HEK293 (cell line): ENCODE measurements at regions of chr20 and their contacts with region 1.

Region 1: DNA sequence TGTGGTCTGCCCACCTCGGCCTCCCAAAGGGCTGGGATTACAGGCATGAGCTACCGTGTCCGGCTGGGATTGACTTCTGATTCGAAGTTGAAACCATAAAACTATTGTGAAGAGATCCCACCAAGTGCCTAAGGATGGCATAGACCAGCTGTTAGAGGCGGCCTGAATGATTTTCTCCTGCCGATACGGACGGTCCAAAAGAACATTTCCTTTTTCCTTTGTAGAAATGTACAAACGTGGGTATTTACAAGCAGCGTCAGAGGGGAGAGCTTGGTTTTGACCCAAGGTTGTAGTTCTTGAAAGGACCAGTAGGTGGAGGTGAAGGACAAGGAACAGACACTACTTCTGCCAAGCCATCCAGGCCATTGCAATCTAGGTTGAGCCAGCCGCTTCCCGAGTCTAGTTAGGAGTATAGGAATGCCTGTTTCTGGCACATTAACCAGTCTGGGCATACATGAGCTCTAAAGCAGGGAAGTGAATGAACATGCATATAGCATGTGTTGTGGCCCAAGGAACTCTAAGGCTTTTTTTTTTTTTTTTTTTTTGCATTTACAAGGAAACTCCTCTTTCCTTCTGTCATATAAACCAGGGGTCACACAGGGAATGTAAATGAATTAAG is 29.1 kb downstream of the MOCS3 start:
- H3K4me3 ChIP-seq: no peak overlapping the region
- H3K27ac ChIP-seq: no peak overlapping the region
- H3K4me1 ChIP-seq: no peaks in the 10 kb centered on the region
- CTCF ChIP-seq: peak; percentile 80

Region 2: GRCh38 chr20:50790651-50791277 is 196.9 kb before region 1 on chr20:
- CTCF ChIA-PET with region 1: interaction called, 14 read pairs
- POLR2A ChIA-PET with region 1: no interaction called
- H3K4me3 ChIP-seq: no peak overlapping the region
- H3K27ac ChIP-seq: peak overlapping the region; percentile 58
- H3K4me1 ChIP-seq: peaks cover 2% of the 10 kb centered on the region; the same call in 1 of the 2 replicates
- CTCF ChIP-seq: peak; percentile 98

Region 3: DNA sequence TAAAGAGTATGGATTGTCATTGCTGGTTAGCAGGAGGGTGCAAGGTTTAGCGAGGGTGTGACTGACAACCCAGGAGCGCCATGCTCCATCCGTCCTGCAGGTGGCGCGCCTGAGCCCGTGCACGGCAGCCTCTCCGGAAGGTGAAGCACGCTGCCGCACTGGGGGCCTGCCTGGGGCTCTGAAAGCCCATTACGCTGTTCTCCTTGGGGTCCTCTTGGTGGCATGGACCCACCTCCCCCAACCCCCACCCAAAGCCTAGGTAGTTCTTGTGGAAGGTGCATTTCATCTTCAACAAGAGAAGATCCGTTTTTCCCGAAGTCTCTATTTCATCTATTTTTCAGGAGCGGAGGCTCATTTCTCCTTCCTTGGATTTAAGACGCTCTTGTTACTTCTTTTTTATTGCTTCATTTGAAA is 232.6 kb after region 1 on chr20:
- CTCF ChIA-PET with region 1: interaction called, 11 read pairs
- POLR2A ChIA-PET with region 1: no interaction called
- H3K4me3 ChIP-seq: no peak overlapping the region
- H3K27ac ChIP-seq: no peak overlapping the region
- H3K4me1 ChIP-seq: no peaks in the 10 kb centered on the region
- CTCF ChIP-seq: peak; percentile 77

Region 4: GRCh38 chr20:51326201-51326819 is 338.6 kb after region 1 on chr20:
- CTCF ChIA-PET with region 1: interaction called, 14 read pairs
- POLR2A ChIA-PET with region 1: no interaction called
- H3K4me3 ChIP-seq: no peak overlapping the region
- H3K27ac ChIP-seq: no peak overlapping the region
- H3K4me1 ChIP-seq: no peaks in the 10 kb centered on the region
- CTCF ChIP-seq: no peak

Region 5: DNA sequence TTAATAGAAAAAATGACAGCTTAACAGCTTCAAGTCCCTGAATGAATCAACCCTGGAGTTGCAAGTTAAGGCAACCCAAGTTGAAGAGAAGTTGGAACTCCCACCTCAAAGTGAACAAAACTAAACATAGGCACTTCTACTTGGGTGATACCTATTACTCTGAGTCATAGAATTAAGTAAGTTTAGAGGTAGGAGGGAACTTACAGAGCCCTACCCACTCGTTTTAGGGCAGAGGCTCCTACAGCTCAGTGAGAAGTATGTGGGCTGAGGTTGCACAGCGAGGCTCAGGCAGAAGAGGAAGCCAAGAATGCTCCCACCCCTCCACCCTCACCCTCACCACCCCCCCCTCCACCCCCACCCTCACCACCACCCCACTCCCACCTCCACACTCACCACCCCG is 512.6 kb after region 1 on chr20:
- CTCF ChIA-PET with region 1: no interaction called
- POLR2A ChIA-PET with region 1: no interaction called
- H3K4me3 ChIP-seq: no peak overlapping the region
- H3K27ac ChIP-seq: no peak overlapping the region
- H3K4me1 ChIP-seq: peaks cover 3% of the 10 kb centered on the region; the same call in 1 of the 2 replicates
- CTCF ChIP-seq: no peak

Region 6: DNA sequence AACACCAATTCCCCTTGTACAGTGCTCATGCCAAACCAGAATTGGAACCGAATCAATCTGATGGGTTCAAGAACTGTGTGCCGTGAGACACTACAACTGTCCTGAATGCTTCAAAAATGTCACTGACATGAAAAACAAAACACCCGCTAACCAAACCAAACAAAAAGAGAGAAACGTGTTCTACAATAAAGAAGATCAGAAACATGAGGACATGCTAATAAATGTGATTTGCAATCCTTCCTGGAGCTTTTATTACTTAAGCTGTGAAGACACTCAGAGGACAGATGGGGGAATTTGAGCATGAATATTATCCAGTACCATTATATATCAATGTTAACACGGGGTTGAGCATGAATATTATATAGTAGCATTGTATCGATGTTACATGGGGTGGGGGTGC is 627.0 kb after region 1 on chr20:
- CTCF ChIA-PET with region 1: interaction called, 10 read pairs
- POLR2A ChIA-PET with region 1: no interaction called
- H3K4me3 ChIP-seq: no peak overlapping the region
- H3K27ac ChIP-seq: no peak overlapping the region
- H3K4me1 ChIP-seq: no peaks in the 10 kb centered on the region
- CTCF ChIP-seq: no peak